WTC11 (cell line): ENCODE measurements at regions of chr15 and their contacts with region 1.

Region 1: DNA sequence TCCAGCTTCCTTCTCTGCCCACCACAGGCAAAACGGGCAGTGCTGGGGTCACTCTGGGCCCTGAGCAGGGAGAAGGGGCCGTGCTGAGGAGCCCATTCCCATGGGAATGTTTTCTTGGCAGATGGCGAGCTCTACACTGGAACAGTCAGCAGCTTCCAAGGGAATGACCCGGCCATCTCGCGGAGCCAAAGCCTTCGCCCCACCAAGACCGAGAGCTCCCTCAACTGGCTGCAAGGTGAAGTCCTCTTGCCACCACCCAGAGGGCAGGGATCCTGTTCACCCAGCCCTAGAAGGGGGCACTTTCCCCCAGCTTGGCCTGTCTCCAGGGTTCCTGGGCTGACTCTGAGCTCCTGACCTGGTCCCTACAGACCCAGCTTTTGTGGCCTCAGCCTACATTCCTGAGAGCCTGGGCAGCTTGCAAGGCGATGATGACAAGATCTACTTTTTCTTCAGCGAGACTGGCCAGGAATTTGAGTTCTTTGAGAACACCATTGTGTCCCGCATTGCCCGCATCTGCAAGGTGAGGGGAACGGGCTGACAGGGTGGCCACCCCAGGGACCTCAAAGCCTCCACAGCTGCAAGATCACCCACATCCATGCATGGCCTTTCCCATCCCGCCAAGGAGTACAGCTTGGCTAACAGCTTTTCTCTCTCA is 12.4 kb downstream of the CIB1 start:
- DNase-seq: peak; percentile 81
- ATAC-seq: peak; percentile 93
- H3K4me3 Mint-ChIP-seq: no peak overlapping the region
- H3K27ac Mint-ChIP-seq: no peak overlapping the region
- H3K4me1 Mint-ChIP-seq: peaks cover 5% of the 10 kb centered on the region
- H3K27me3 Mint-ChIP-seq: no peaks in the 10 kb centered on the region
- CTCF ChIP-seq: peak; percentile 35; the same call in 1 of the 2 replicates

Region 2: GRCh38 chr15:90086868-90087268 is 134.5 kb before region 1 on chr15:
- CTCF ChIA-PET with region 1: interaction called, 14 read pairs
- POLR2A ChIA-PET with region 1: no interaction called
- DNase-seq: peak; percentile 68
- ATAC-seq: peak; percentile 65
- H3K4me3 Mint-ChIP-seq: no peak overlapping the region
- H3K27ac Mint-ChIP-seq: peak overlapping the region; percentile 75; the same call in 1 of the 2 replicates
- H3K4me1 Mint-ChIP-seq: peaks cover 5% of the 10 kb centered on the region; the same call in 1 of the 2 replicates
- H3K27me3 Mint-ChIP-seq: no peaks in the 10 kb centered on the region
- CTCF ChIP-seq: peak; percentile 59

Region 3: DNA sequence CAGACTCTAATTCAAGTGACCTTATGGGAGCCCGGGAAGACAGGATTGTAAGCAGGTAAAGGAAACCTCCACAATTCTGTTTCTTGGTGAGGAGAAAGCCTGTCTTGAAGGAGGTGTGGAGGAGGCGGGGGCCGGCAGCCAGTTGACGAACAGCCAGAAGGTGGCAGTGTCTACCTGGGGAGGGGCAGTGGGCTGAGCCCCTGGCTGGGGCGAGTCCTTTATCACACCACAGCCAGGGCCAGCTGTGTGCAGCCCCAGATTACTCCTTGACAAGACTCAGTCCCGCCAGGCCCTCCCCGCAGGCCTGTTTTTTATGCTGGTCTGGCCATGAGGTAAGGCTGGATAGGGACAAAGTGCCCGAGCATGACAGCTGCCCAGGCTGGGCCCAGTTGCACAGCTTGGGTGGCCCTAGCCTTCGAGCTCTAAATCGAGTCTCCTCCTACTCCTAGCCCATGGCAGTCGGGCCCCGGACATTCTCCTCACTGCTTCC is 78.2 kb before region 1 on chr15:
- CTCF ChIA-PET with region 1: interaction called, 110 read pairs
- POLR2A ChIA-PET with region 1: interaction called, 4 read pairs
- DNase-seq: peak; percentile 92
- ATAC-seq: peak; percentile 99
- H3K4me3 Mint-ChIP-seq: no peak overlapping the region
- H3K27ac Mint-ChIP-seq: no peak overlapping the region
- H3K4me1 Mint-ChIP-seq: peaks cover 10% of the 10 kb centered on the region
- H3K27me3 Mint-ChIP-seq: peaks cover 5% of the 10 kb centered on the region; the same call in 1 of the 2 replicates
- CTCF ChIP-seq: peak; percentile 62; the same call in 1 of the 2 replicates

Region 4: DNA sequence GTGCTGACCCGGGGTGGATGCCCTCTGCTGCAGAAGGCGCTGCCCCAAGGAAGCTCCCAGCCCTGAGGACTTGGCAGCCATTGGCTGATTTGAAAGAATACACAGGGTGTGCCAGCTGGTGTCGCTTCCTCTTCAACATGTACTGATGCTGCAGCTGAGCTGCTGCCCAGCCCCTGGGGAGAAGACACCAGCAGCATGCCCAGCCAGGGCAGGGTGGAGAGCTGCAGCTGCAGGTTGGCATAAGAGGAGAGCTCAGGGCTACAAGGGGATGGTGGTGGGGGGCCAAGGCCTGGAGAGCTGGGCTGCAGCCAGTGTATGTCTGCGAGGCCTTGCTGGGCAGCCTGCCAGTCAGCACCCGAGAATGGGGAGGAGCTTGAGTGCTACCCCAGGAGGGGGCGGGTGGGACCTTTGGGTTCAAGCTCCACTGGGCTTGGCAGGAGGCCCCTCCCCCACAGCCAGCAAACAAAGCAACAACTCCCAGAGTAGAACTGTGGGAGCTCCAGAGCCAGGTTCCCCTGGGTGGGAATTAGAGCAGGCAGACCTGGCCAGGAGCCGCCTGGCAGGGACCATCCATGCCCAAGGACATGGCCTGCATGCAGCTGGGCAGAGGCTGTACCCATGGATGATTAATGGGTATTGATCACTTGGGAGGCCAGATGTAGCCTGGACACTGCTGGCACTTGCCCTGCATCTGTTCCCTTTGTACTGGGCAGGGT is 29.4 kb before region 1 on chr15:
- CTCF ChIA-PET with region 1: interaction called, 12 read pairs
- POLR2A ChIA-PET with region 1: interaction called, 4 read pairs
- DNase-seq: no peak
- ATAC-seq: peak; percentile 26; the same call in 1 of the 2 replicates
- H3K4me3 Mint-ChIP-seq: no peak overlapping the region
- H3K27ac Mint-ChIP-seq: no peak overlapping the region
- H3K4me1 Mint-ChIP-seq: peaks cover 17% of the 10 kb centered on the region
- H3K27me3 Mint-ChIP-seq: no peaks in the 10 kb centered on the region
- CTCF ChIP-seq: no peak

Region 5: DNA sequence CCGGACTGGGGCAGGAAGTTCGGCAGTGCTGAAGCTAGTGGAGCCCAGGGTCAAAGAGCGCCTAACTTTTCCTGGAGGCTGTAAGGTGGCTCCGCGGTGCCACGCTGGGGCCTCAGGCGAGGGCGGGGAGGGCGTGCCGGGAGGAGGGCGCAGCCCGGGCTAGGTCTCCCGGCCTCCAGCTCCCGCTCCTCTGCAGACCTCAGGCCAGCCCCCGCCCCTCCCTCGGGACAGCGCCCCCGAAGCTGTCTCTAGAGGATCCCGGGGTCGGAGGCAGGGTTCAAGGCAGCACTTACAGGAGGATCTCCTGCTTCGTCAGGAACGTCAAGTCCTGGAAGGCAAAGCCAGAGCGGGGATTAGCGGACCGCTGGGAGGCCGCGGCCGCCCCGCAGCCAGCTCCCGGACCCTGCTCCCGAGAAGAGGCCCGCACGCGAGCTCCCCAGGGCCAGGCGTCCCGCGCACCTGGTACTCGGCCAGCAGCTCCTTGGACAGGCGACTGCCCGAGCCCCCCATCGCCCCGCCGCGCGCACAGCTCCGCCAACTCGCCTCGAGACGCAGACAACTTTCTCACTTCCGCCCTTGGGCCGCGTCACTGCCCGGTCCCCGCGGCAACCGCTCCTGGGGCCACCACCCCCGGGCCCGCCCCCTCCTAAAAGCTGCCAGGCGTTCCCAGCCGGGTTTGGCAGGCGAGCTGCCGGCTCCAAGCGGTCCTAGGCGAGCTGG is 12.2 kb after region 1 on chr15 and contains the start of gene CIB1:
- CTCF ChIA-PET with region 1: interaction called, 66 read pairs
- POLR2A ChIA-PET with region 1: interaction called, 6 read pairs
- DNase-seq: peak; percentile 95
- ATAC-seq: peak; percentile 90
- H3K4me3 Mint-ChIP-seq: peak within 1 kb of the TSS; percentile 72
- H3K27ac Mint-ChIP-seq: peak within 1 kb of the TSS; percentile 25
- H3K4me1 Mint-ChIP-seq: peaks cover 16% of the 10 kb centered on the region
- H3K27me3 Mint-ChIP-seq: no peaks in the 10 kb centered on the region
- CTCF ChIP-seq: no peak
- total RNA-seq, gene CIB1: 26.1 to 29.6 TPM (median 26.9 TPM) in 3 replicates

Region 6: GRCh38 chr15:90291679-90292356 is 70.4 kb after region 1 on chr15:
- CTCF ChIA-PET with region 1: interaction called, 10 read pairs
- POLR2A ChIA-PET with region 1: interaction called, 3 read pairs
- DNase-seq: peak; percentile 41
- ATAC-seq: no peak
- H3K4me3 Mint-ChIP-seq: no peak overlapping the region
- H3K27ac Mint-ChIP-seq: no peak overlapping the region
- H3K4me1 Mint-ChIP-seq: peaks cover 35% of the 10 kb centered on the region
- H3K27me3 Mint-ChIP-seq: no peaks in the 10 kb centered on the region
- CTCF ChIP-seq: no peak

Region 7: DNA sequence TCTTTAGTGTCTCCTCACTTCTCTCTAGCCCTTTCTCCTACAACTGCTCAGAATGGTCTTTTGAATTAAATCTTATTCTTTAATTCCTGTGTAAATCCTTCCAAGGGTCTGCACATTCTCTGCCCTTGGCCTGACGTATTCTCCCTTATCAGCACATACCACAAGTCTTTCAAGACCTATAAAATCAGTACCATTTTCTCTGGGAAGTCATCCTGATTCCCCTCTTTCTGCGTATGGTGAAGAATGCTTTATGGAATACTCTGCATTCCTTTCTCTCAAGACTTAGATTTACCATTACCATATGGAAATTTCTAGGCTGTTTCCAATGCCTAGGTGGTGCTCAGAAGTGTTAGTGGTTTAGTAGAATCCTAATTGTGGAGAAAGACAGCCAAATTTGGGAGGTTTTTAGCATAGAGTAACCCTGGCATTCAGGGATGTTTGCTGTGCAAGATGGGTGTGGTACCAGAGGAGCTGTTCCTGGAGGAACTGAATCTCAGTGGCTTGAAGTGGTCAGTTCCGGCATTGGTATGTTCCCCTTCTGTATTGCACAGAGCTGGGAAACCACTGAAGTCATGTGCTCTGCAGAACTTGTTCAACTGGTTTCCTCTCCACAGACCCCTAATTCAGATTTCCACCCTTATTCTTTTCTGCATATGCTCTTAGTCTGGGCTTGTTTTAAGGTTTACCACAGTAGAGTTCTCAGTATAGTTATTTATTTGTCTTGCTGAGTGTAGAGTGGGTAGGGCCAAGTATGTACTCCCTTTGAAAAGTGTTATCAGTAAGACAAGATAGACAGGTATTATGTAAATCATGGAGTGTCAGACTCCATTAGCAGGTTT is 191.2 kb after region 1 on chr15:
- CTCF ChIA-PET with region 1: no interaction called
- POLR2A ChIA-PET with region 1: no interaction called
- DNase-seq: no peak
- ATAC-seq: peak; percentile 83
- H3K4me3 Mint-ChIP-seq: peak overlapping the region; percentile 55
- H3K27ac Mint-ChIP-seq: peak overlapping the region; percentile 100
- H3K4me1 Mint-ChIP-seq: peaks cover 53% of the 10 kb centered on the region
- H3K27me3 Mint-ChIP-seq: no peaks in the 10 kb centered on the region
- CTCF ChIP-seq: no peak